A673 (cell line): ENCODE measurements at regions of chr1 and their contacts with region 1.

Region 1: GRCh38 chr1:56666112-56666608 is 21.0 kb downstream of the PRKAA2 start:
- DNase-seq: no peak
- H3K4me3 ChIP-seq: no peak overlapping the region
- H3K27ac ChIP-seq: no peak overlapping the region
- H3K4me1 ChIP-seq: no peaks in the 10 kb centered on the region
- H3K27me3 ChIP-seq: peaks cover 6% of the 10 kb centered on the region
- CTCF ChIP-seq: no peak

Region 2: DNA sequence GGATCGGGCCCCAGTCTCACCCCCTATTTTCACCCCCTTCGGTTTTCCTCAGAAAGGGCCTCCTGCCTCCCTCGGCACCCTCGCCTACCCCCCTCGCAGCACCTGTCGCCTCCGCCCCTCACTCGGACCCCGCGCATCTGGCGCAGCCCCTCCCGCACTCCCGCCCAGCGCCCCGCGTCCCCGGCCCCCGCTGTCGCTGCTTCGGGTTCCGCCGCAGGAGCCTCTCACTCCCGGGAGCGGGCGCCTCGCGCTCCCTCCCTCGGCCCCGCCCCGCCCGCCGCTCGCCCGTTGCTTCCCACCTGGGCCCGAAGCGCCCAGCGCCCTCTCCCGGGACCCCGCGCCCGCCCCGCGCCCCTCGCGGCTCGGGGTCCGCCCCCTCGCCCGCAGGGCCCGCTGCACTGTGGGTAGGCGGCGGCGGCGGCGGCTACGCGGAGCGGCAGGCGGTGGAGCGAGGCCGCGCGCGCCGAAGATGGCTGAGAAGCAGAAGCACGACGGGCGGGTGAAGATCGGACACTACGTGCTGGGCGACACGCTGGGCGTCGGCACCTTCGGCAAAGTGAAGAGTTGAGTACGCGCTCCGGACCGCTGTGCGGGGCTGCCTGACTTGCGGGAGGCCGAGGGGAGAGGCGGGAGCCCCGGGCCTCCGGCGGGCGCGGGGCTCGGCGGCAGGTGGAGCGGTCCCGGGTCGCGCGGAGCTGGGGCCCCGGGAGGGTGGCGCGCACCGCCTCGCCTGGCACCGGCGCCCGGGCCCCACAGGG is 21.1 kb before region 1 on chr1 and contains the start of gene PRKAA2:
- CTCF ChIA-PET with region 1: no interaction called
- POLR2A ChIA-PET with region 1: no interaction called
- intact Hi-C with region 1: loop called (anchors 1 kb)
- DNase-seq: peak; percentile 29
- H3K4me3 ChIP-seq: peak within 1 kb of the TSS; percentile 48
- H3K27ac ChIP-seq: no peak within 1 kb of the TSS
- H3K4me1 ChIP-seq: no peaks in the 10 kb centered on the region
- H3K27me3 ChIP-seq: peaks cover 68% of the 10 kb centered on the region
- CTCF ChIP-seq: no peak
- total RNA-seq, gene PRKAA2: 0.11 and 0.20 TPM in 2 replicates